Posterior cingulate gyrus (tissue), 11 donors: ENCODE measurements at regions of chr20 and their contacts with region 1.

Region 1: DNA sequence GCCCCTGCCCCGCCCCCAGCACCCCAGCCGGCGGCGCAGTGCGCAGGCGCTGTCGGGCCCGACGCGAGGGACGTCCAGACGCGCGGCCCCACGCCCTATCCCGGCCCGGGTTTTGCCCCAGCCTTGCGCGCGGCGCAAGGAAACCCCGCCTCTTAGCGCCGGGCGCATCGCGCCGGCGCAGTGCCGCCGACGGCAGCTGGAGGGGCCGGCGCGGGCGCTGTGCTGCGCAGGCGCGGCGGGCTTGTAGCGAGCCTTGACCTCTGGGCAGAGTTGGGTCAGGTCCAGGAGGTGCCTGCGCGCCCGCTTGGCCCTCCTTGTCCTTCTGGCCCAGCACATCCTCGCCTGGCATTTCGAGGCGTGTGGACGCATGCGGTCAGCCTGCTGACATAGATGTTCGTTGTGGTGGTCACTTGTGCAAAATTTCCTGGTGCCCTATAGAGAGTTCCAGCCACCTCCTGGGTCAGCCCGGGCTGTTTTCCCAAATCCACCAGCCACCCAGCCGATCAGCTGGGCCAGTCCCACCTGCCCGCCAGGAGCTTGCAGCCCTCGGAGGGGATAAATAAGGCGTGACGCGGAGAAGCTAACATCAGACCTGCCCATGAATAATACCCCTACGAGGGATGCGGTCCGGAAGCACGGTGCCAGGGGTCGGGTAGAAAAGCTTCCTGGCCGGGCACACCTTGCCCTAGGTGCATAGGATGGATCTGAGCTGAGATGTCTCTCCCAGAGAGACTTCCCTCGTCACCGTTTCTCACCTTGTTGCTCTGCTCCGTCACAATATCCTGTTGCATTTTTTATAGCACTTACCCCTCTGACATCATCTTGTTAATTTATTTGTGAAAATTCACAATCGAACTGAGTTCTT is 442 bp upstream of the PRELID3B start:
- DNase-seq: peak; percentile 73 to 98 (median 87)

Region 2: GRCh38 chr20:58818585-58819285 is 224.3 kb before region 1 on chr20:
- intact Hi-C with region 1: no loop called
- DNase-seq: peak in 2 of 10 donors; percentile 4 to 59

Region 3: GRCh38 chr20:58890518-58891085 is 152.4 kb before region 1 on chr20:
- intact Hi-C with region 1: loop called (anchors 2 kb)
- DNase-seq: peak; percentile 44 to 94 (median 58)

Region 4: GRCh38 chr20:59032023-59032712 is 10.9 kb before region 1 on chr20 and contains the start of gene ATP5F1E:
- intact Hi-C with region 1: loop called (anchors 1 kb)
- DNase-seq: peak; percentile 91 to 100 (median 96)